ENCODE measurements at regions of chr6 and their contacts with region 1.

Region 1: DNA sequence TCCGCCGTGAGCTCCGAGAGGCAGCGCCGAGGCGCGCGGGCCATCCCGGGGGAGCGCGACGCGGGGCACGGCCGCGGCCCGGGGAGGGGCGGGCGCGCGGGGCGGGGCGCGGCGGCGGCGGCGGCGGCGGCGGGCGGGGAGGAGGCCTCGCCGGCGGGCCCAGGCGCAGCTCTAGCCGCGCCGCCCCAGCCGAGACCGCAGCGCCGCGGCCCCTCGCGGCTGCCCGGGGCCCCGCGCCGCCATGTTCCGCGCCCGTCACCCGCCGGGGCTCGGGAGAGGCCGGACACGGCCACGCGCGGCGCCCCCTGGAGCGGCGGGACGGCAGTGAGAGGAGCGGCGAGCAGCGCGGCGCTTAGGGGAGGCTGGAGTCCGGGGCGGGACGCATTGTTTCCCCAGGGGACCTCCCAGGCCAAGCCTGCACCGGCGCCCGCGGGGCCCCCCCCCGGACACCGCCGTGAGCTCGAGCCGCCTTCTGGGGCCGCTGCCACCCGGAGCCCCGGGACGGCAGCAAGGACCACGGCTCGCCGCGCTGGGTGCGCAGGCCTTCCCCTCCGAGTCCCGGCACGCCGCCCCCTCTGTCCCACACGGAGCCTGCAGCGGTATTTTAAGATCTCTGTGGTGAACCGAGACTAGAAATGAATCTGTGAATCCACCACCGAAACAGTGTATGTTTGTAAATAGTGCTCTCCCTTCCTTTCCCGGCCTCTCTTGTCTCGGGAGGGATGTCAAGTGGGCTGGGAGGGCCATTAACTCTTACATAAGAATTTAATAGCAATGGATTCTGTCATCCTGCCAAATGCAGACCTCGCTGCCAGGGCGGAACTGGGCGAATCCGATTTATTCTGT is at the start of gene KIF13A:
- DNase-seq: peak; percentile 75 to 81
- ATAC-seq: peak; percentile 67 to 86 (median 78)
- H3K4me3 ChIP-seq: peak within 1 kb of the TSS; percentile 74 to 94 (median 86)
- H3K27ac ChIP-seq: peak within 1 kb of the TSS; percentile 94 to 99 (median 98)
- H3K4me1 ChIP-seq: peaks cover 0 to 44% (median 39%) of the 10 kb centered on the region in 9 donors
- H3K27me3 ChIP-seq: no peaks in the 10 kb centered on the region
- CTCF ChIP-seq: peak in 7 of 9 donors; percentile 10 to 61 (median 42)
- total RNA-seq, gene KIF13A: 48.0 to 198 (median 118) TPM

Region 2: GRCh38 chr6:17706580-17707370 is 281.0 kb before region 1 on chr6 and contains the start of gene NUP153:
- intact Hi-C with region 1: loop called in 1 of 10 experiments (anchors 10 kb)
- DNase-seq: peak; percentile 98 to 99
- ATAC-seq: peak; percentile 86 to 94 (median 88)
- H3K4me3 ChIP-seq: peak within 1 kb of the TSS; percentile 71 to 100 (median 96)
- H3K27ac ChIP-seq: peak within 1 kb of the TSS; percentile 94 to 100 (median 99)
- H3K4me1 ChIP-seq: peaks cover 3 to 47% (median 35%) of the 10 kb centered on the region in 9 donors
- H3K27me3 ChIP-seq: no peaks in the 10 kb centered on the region
- CTCF ChIP-seq: no peak
- total RNA-seq, gene NUP153: 20.7 to 30.5 (median 26.0) TPM

Region 3: DNA sequence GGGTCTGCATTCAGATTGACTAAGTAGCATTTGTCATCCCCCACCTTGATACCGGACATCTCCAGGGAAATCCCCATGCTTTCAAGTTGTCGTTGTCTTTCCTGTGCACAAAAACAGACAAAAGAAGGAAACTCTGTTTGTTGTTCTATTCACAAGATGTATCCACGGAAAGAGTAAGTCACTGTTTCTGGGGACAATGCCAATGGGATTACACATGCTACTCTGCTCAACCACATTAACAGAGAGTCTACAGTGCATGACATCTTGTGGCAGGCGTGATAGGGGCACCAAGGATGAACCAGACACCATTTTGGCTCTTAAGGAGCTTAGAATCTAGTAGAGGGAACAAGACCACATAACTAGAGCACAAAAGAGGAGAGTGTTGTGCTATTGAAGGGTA is 156.7 kb before region 1 on chr6:
- intact Hi-C with region 1: loop called in 3 of 10 experiments (anchors 5 kb)
- DNase-seq: peak in 1 of 2 donors; percentile 54
- ATAC-seq: peak; percentile 67 to 92 (median 88)
- H3K4me3 ChIP-seq: no peak overlapping the region
- H3K27ac ChIP-seq: peak overlapping the region in 5 of 10 donors; percentile 20 to 66 (median 41)
- H3K4me1 ChIP-seq: peaks cover 0 to 17% (median 11%) of the 10 kb centered on the region in 9 donors
- H3K27me3 ChIP-seq: no peaks in the 10 kb centered on the region
- CTCF ChIP-seq: peak in 1 of 9 donors; percentile 10

Region 4: GRCh38 chr6:17851001-17851719 is 136.6 kb before region 1 on chr6:
- intact Hi-C with region 1: loop called in 2 of 10 experiments (anchors 10 kb)
- DNase-seq: no peak
- ATAC-seq: no peak
- H3K4me3 ChIP-seq: no peak overlapping the region
- H3K27ac ChIP-seq: peak overlapping the region in 1 of 10 donors; percentile 31
- H3K4me1 ChIP-seq: peaks cover 0 to 17% (median 10%) of the 10 kb centered on the region in 9 donors
- H3K27me3 ChIP-seq: no peaks in the 10 kb centered on the region
- CTCF ChIP-seq: no peak

Region 5: GRCh38 chr6:17932330-17932852 is 55.4 kb before region 1 on chr6:
- intact Hi-C with region 1: loop called (anchors 2 to 10 kb)
- DNase-seq: peak in 1 of 2 donors; percentile 83
- ATAC-seq: peak; percentile 82 to 97 (median 88)
- H3K4me3 ChIP-seq: peak overlapping the region in 2 of 10 donors; percentile 1 to 12
- H3K27ac ChIP-seq: peak overlapping the region; percentile 67 to 93 (median 86)
- H3K4me1 ChIP-seq: peaks cover 15 to 99% (median 85%) of the 10 kb centered on the region in 9 donors
- H3K27me3 ChIP-seq: no peaks in the 10 kb centered on the region
- CTCF ChIP-seq: no peak

Region 6: DNA sequence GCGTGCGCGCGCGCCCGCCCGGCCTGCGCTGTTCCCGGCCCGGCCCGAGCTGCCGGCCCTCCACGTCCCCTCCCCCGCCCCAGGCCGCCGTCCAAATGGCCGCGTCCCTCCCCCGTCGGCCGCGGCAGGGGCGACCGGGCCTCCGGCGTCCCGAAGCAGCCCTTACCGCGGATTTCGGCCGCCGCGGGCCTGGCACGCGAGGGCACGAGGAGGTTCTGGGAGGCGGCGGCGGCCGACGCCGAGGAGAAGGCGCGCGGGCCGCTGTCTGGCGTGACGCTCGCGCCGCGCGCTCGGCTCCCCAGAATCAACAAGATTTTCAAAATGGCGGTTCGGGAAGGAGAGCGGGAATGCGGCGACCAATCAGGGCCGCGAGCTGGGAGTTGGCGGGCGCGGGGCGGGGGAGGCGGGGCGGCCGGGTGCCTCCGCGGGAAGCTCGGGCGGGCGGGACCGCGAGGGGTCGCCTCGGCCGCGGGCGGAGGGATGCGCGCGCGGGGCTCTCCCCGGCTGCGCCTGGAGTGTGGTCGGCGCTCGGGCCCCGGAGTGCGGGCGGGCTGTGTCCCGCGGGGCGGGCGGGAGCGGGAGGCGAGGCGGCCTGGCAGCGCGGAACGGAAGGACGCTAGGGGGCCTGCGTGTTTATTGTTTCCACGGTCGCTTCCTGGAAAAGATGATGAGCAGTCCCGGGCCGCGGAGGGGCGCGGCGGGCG is 276.6 kb after region 1 on chr6 and contains the start of gene DEK:
- intact Hi-C with region 1: loop called in 1 of 10 experiments (anchors 10 kb)
- DNase-seq: peak; percentile 89 to 90
- ATAC-seq: peak; percentile 77 to 92 (median 88)
- H3K4me3 ChIP-seq: peak within 1 kb of the TSS; percentile 74 to 95 (median 90)
- H3K27ac ChIP-seq: peak within 1 kb of the TSS; percentile 89 to 98 (median 94)
- H3K4me1 ChIP-seq: peaks cover 0 to 45% (median 38%) of the 10 kb centered on the region in 9 donors
- H3K27me3 ChIP-seq: no peaks in the 10 kb centered on the region
- CTCF ChIP-seq: peak; percentile 36 to 78 (median 62)
- total RNA-seq, gene DEK: 38.6 to 78.3 (median 55.6) TPM